T-cell (primary cell): ENCODE measurements at regions of chr1 and their contacts with region 1.

Region 1: DNA sequence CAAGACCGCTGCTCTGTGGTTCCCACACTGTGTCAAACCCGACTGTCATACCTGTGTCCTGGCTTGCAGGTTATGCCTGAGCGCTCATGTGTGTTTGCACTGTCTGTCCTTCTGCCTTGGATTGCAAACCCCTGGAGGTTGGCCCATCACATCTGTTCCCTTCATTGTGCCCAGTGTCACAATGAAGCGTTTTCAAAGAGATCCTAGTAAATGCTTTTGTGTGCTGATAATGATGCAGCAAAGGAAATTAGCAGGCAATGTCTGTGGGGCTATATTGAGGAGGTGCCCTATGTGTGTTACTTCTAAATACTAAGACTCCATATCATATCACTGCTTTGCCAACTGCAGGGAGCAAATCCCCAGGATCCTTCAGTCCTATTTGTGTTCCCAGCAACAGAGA is 424.4 kb upstream of the NFIA start:
- DNase-seq: no peak
- ATAC-seq: no peak
- H3K4me3 ChIP-seq: no peak overlapping the region
- H3K4me3 Mint-ChIP-seq: no peak overlapping the region
- H3K27ac ChIP-seq: no peak overlapping the region
- H3K27ac Mint-ChIP-seq: no peak overlapping the region
- H3K4me1 ChIP-seq: no peaks in the 10 kb centered on the region
- H3K4me1 Mint-ChIP-seq: no peaks in the 10 kb centered on the region
- H3K27me3 ChIP-seq: no peaks in the 10 kb centered on the region
- H3K27me3 Mint-ChIP-seq: peaks cover 1 to 4% of the 10 kb centered on the region in 2 donors

Region 2: DNA sequence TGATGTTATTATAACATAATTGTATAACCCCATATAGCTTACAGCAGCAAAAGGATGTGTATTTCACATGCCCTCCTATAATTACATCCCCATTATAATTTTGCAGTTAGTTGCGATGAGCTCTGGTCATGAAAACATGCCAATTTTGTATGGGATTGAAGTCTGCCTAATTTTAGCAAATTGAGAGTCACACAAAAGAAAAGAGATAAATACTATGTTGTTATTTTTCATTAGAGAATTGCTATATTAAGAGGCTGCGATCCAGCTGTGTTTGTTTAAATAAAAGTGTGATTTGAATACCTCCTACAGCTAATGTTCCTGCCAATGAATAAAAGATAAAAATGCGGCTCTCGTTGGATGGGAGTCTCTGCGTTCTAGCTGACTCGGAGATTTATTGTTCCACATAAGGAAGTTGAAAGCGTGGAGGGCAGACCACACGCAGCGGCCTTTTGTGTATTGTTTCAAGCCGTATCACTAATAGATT is 36.5 kb before region 1 on chr1:
- CTCF ChIA-PET with region 1: no interaction called
- POLR2A ChIA-PET with region 1: interaction called in 1 of 2 experiments, 11 read pairs
- DNase-seq: no peak
- ATAC-seq: no peak
- H3K4me3 ChIP-seq: no peak overlapping the region
- H3K4me3 Mint-ChIP-seq: no peak overlapping the region
- H3K27ac ChIP-seq: no peak overlapping the region
- H3K27ac Mint-ChIP-seq: no peak overlapping the region
- H3K4me1 ChIP-seq: no peaks in the 10 kb centered on the region
- H3K4me1 Mint-ChIP-seq: no peaks in the 10 kb centered on the region
- H3K27me3 ChIP-seq: no peaks in the 10 kb centered on the region
- H3K27me3 Mint-ChIP-seq: peaks cover 4 to 18% of the 10 kb centered on the region in 2 donors